ENCODE measurements at regions of chr7 and their contacts with region 1.

Region 1: GRCh38 chr7:84568781-84569180 is 374.2 kb upstream of the SEMA3A start:
- DNase-seq: no peak
- ATAC-seq: no peak
- H3K4me3 ChIP-seq: no peak overlapping the region
- H3K4me3 Mint-ChIP-seq: no peak overlapping the region
- H3K27ac ChIP-seq: no peak overlapping the region
- H3K27ac Mint-ChIP-seq: no peak overlapping the region
- H3K4me1 ChIP-seq: no peaks in the 10 kb centered on the region
- H3K4me1 Mint-ChIP-seq: no peaks in the 10 kb centered on the region
- H3K27me3 ChIP-seq: no peaks in the 10 kb centered on the region
- H3K27me3 Mint-ChIP-seq: no peaks in the 10 kb centered on the region

Region 2: DNA sequence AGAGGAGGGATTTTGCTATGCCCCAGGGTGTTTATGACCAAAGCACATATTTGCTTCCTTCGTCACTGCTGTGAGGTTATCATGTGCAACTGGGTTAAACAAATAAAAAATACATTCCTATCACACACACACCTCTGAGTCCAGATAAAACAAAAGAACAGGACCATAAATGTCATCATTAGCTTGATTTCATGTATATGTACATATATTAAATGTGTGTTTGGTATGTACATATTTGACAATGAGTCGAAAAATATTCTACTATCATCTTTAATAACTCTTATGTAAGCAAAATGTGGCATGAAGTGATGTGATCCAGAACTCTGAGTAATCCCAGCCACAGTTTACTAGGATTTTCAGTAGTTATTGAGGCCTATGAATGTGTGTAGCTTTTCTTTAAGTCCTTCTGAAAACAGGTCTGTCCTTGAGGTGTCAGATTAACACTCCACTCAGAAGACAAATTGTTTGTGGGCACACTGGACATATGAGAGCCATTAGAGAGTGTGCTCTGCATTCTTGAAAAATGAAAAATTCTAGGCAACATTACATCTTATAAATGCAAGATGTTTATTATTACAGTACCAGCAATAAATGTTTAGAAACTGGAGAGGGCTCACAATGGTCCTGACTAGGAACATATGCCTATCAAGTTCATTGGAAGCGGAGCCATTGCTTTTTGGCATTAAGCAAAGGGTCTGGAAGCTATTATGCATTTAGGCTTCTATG is 39.1 kb before region 1 on chr7:
- CTCF ChIA-PET with region 1: no interaction called
- POLR2A ChIA-PET with region 1: no interaction called
- DNase-seq: no peak
- ATAC-seq: no peak
- H3K4me3 ChIP-seq: no peak overlapping the region
- H3K4me3 Mint-ChIP-seq: no peak overlapping the region
- H3K27ac ChIP-seq: no peak overlapping the region
- H3K27ac Mint-ChIP-seq: no peak overlapping the region
- H3K4me1 ChIP-seq: no peaks in the 10 kb centered on the region
- H3K4me1 Mint-ChIP-seq: no peaks in the 10 kb centered on the region
- H3K27me3 ChIP-seq: no peaks in the 10 kb centered on the region
- H3K27me3 Mint-ChIP-seq: no peaks in the 10 kb centered on the region

Region 3: GRCh38 chr7:84548366-84549365 is 20.1 kb before region 1 on chr7:
- CTCF ChIA-PET with region 1: no interaction called
- POLR2A ChIA-PET with region 1: no interaction called
- DNase-seq: no peak
- ATAC-seq: no peak
- H3K4me3 ChIP-seq: no peak overlapping the region
- H3K4me3 Mint-ChIP-seq: no peak overlapping the region
- H3K27ac ChIP-seq: no peak overlapping the region
- H3K27ac Mint-ChIP-seq: no peak overlapping the region
- H3K4me1 ChIP-seq: no peaks in the 10 kb centered on the region
- H3K4me1 Mint-ChIP-seq: no peaks in the 10 kb centered on the region
- H3K27me3 ChIP-seq: peaks cover 0 to 2% of the 10 kb centered on the region in 2 experiments
- H3K27me3 Mint-ChIP-seq: no peaks in the 10 kb centered on the region

Region 4: DNA sequence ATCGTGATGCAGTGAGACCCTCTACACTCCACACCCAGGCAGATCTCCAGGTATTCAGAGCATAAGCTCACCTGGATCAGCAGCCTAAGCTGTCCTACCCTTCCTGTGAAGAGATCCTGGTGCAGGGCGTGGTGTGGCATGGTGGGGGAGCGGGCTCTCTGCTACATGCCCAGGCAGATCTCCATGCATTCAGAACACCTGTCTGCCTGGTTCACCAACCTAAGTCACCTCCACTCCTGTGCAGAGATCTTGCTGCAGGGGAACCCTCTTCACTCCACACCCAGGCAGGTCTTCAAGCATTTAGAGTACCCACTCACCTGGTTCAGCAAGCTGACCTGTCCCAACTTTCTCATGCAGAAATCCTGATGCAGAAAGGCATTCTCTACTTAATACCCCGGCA is 20.2 kb after region 1 on chr7:
- CTCF ChIA-PET with region 1: no interaction called
- POLR2A ChIA-PET with region 1: no interaction called
- DNase-seq: no peak
- ATAC-seq: no peak
- H3K4me3 ChIP-seq: no peak overlapping the region
- H3K4me3 Mint-ChIP-seq: no peak overlapping the region
- H3K27ac ChIP-seq: no peak overlapping the region
- H3K27ac Mint-ChIP-seq: no peak overlapping the region
- H3K4me1 ChIP-seq: no peaks in the 10 kb centered on the region
- H3K4me1 Mint-ChIP-seq: no peaks in the 10 kb centered on the region
- H3K27me3 ChIP-seq: no peaks in the 10 kb centered on the region
- H3K27me3 Mint-ChIP-seq: no peaks in the 10 kb centered on the region

Region 5: DNA sequence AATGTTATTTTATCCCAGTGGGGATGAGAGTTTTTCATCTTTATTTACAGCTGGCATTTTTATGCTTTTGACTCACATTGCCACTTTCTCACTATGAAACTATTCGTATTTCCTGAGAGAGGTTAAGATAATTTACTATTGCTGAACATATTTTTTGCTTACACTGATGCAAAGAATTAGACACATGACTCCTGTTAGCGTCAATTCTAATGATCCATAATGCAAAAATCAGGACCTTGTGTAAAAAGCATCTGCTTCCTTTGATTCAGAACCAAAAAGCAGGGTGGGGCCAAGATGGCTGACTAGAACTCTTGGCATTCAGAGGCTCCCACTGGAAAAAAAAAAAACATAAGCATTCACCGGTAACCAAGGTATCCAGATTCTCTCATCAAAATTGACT is 153.3 kb after region 1 on chr7:
- CTCF ChIA-PET with region 1: no interaction called
- POLR2A ChIA-PET with region 1: interaction called in 1 of 2 experiments, 10 read pairs
- DNase-seq: no peak
- ATAC-seq: no peak
- H3K4me3 ChIP-seq: no peak overlapping the region
- H3K4me3 Mint-ChIP-seq: no peak overlapping the region
- H3K27ac ChIP-seq: no peak overlapping the region
- H3K27ac Mint-ChIP-seq: no peak overlapping the region
- H3K4me1 ChIP-seq: no peaks in the 10 kb centered on the region
- H3K4me1 Mint-ChIP-seq: no peaks in the 10 kb centered on the region
- H3K27me3 ChIP-seq: no peaks in the 10 kb centered on the region
- H3K27me3 Mint-ChIP-seq: no peaks in the 10 kb centered on the region

Measured in T-cell (primary cell).